ENCODE measurements at regions of chr17 and their contacts with region 1.

Region 1: GRCh38 chr17:77957857-77958715 is at the start of gene TNRC6C:
- DNase-seq: peak; percentile 100
- ATAC-seq: peak; percentile 87 to 90
- H3K4me3 ChIP-seq: peak within 1 kb of the TSS; percentile 65 to 99 (median 67)
- H3K27ac ChIP-seq: peak within 1 kb of the TSS; percentile 80 to 90 (median 84)
- H3K4me1 ChIP-seq: peaks cover 33 to 37% of the 10 kb centered on the region in 2 donors
- H3K27me3 ChIP-seq: no peaks in the 10 kb centered on the region
- CTCF ChIP-seq: peak in 4 of 5 experiments; percentile 23 to 35 (median 30)
- POLR2A ChIP-seq: peak; percentile 100
- total RNA-seq, gene TNRC6C: 4.7 to 9.0 (median 7.6) TPM

Region 2: GRCh38 chr17:77602062-77602746 is 355.9 kb before region 1 on chr17:
- in situ Hi-C with region 1: no loop called
- intact Hi-C with region 1: loop called (anchors 2 kb)
- DNase-seq: peak; percentile 92 to 93
- ATAC-seq: peak; percentile 93
- H3K4me3 ChIP-seq: peak overlapping the region; percentile 12 to 38 (median 36)
- H3K27ac ChIP-seq: peak overlapping the region; percentile 89 to 99 (median 94)
- H3K4me1 ChIP-seq: peaks cover 27 to 31% of the 10 kb centered on the region in 2 donors
- H3K27me3 ChIP-seq: no peaks in the 10 kb centered on the region
- CTCF ChIP-seq: no peak
- POLR2A ChIP-seq: peak in 1 of 2 donors; percentile 17

Region 3: GRCh38 chr17:77834170-77835115 is 123.6 kb before region 1 on chr17:
- in situ Hi-C with region 1: no loop called
- intact Hi-C with region 1: loop called (anchors 1 kb)
- DNase-seq: peak; percentile 73 to 84
- ATAC-seq: peak; percentile 77 to 79
- H3K4me3 ChIP-seq: peak overlapping the region in 1 of 4 donors; percentile 30
- H3K27ac ChIP-seq: peak overlapping the region; percentile 79 to 88 (median 84)
- H3K4me1 ChIP-seq: peaks cover 26 to 55% of the 10 kb centered on the region in 2 donors
- H3K27me3 ChIP-seq: no peaks in the 10 kb centered on the region
- CTCF ChIP-seq: no peak
- POLR2A ChIP-seq: peak; percentile 44 to 54

Region 4: GRCh38 chr17:77887464-77888241 is 70.4 kb before region 1 on chr17:
- in situ Hi-C with region 1: no loop called
- intact Hi-C with region 1: loop called (anchors 2 kb)
- DNase-seq: peak; percentile 67 to 84
- ATAC-seq: peak; percentile 87 to 91
- H3K4me3 ChIP-seq: peak overlapping the region; percentile 61 to 65 (median 62)
- H3K27ac ChIP-seq: peak overlapping the region; percentile 56 to 67 (median 65)
- H3K4me1 ChIP-seq: peaks cover 5 to 11% of the 10 kb centered on the region in 2 donors
- H3K27me3 ChIP-seq: no peaks in the 10 kb centered on the region
- CTCF ChIP-seq: no peak
- POLR2A ChIP-seq: peak; percentile 26 to 40

Region 5: GRCh38 chr17:77999413-78000173 is 41.5 kb after region 1 on chr17:
- in situ Hi-C with region 1: no loop called
- intact Hi-C with region 1: loop called (anchors 5 kb)
- DNase-seq: peak in 1 of 2 donors; percentile 23
- ATAC-seq: peak; percentile 36 to 59
- H3K4me3 ChIP-seq: no peak overlapping the region
- H3K27ac ChIP-seq: peak overlapping the region in 3 of 4 donors; percentile 31 to 49 (median 44)
- H3K4me1 ChIP-seq: peaks cover 54 to 70% of the 10 kb centered on the region in 2 donors
- H3K27me3 ChIP-seq: no peaks in the 10 kb centered on the region
- CTCF ChIP-seq: no peak
- POLR2A ChIP-seq: no peak

Region 6: DNA sequence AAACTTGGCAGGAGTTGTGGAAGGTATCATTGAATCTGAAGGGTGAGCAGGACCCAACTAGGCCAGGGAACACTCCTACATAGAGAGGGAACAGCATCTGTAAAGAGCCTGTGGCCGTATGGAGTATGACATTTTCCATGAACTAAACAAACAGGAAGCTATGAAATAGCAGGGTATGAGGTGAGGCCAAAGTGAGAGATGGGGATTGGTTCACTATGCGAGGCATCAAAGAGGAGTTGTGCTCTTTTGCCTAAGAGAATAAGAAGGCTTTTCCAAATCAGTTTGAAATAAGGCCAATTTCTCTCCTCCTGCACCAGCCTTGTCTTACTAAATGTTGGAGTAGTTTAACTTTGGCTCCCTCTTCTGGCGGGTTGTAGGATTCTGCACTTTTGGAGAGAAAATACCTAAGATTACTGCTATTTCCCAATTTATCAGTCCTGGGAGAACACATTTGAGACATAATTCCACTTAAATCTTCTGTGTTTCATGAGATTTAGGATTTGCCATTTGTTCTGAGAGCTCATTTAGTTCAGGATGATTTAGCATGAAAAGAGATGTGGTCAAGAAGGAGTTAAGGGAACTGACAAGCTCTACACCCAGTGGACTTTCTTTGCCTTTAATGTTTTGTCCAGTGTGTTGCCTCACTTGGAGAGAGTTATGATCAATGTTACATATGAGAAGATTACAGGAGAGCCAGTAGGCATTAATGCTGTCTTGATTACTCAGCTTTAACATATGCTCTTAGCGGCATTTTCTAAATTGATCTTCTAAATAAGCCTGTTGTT is 55.8 kb after region 1 on chr17:
- in situ Hi-C with region 1: no loop called
- intact Hi-C with region 1: loop called (anchors 5 kb)
- DNase-seq: peak in 1 of 2 donors; percentile 43
- ATAC-seq: peak; percentile 73 to 80
- H3K4me3 ChIP-seq: no peak overlapping the region
- H3K27ac ChIP-seq: peak overlapping the region in 1 of 4 donors; percentile 0
- H3K4me1 ChIP-seq: peaks cover 0 to 7% of the 10 kb centered on the region in 2 donors
- H3K27me3 ChIP-seq: no peaks in the 10 kb centered on the region
- CTCF ChIP-seq: peak; percentile 68 to 83 (median 76)
- POLR2A ChIP-seq: no peak